ENCODE measurements at regions of chr17 and their contacts with region 1.

Region 1: GRCh38 chr17:68462381-68463210 is 5.3 kb upstream of the WIPI1 start:
- DNase-seq: peak; percentile 62 to 87 (median 72)
- ATAC-seq: peak; percentile 63 to 80 (median 78)
- H3K4me3 ChIP-seq: peak overlapping the region in 2 of 12 donors; percentile 15
- H3K27ac ChIP-seq: peak overlapping the region; percentile 59 to 96 (median 80)
- H3K4me1 ChIP-seq: peaks cover 0 to 57% (median 28%) of the 10 kb centered on the region in 12 donors
- H3K27me3 ChIP-seq: no peaks in the 10 kb centered on the region
- CTCF ChIP-seq: peak; percentile 56 to 84 (median 75)
- POLR2A ChIP-seq: no peak

Region 2: GRCh38 chr17:68172461-68172954 is 290.1 kb before region 1 on chr17:
- intact Hi-C with region 1: loop called (anchors 1 to 5 kb)
- DNase-seq: peak; percentile 53 to 73 (median 62)
- ATAC-seq: peak; percentile 54 to 81 (median 77)
- H3K4me3 ChIP-seq: no peak overlapping the region
- H3K27ac ChIP-seq: no peak overlapping the region
- H3K4me1 ChIP-seq: peaks cover 0 to 4% (median 0%) of the 10 kb centered on the region in 12 donors
- H3K27me3 ChIP-seq: no peaks in the 10 kb centered on the region
- CTCF ChIP-seq: peak; percentile 91 to 99 (median 97)
- POLR2A ChIP-seq: no peak

Region 3: DNA sequence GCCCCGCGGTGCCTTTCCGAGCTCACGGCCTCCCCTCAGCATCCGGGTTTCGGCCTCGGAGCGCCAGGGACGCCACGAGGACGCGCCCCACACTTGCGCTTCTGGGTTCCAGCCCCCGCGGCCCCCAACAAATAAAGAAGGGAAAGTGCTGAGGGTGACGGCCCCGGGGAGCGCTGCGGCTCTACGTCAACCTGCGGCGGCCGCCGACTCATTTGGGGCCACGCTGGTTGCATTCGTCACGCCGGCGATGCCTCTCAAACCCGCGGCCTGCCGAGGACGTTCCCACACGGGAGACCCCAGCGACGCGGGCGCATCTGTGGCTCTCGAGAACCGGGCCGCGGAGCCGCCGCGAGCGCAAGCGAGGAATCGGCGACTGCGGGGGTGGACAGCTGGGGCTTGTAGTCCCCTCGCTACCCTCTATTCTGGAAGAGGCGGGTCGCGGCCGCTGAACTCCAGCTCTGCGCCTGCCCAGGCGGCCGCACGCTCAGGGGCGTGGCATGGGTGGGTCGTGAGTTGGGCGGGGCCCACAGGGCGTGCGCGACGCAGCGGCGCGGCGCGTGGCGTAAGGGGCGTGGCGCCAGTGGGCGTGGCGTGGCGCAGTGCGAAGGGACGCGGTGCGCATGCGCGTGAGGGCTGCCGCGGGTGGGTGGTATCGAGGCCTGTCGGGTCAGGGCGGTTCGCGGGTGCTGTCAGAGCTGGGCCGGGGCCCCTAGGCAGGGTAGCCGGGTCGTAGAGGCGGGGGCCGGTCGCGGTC is 215.0 kb before region 1 on chr17 and contains the start of gene AMZ2:
- intact Hi-C with region 1: loop called in 2 of 10 experiments (anchors 5 kb)
- DNase-seq: peak; percentile 94 to 99 (median 96)
- ATAC-seq: peak; percentile 98 to 100 (median 98)
- H3K4me3 ChIP-seq: peak within 1 kb of the TSS; percentile 68 to 94 (median 86)
- H3K27ac ChIP-seq: peak within 1 kb of the TSS; percentile 89 to 99 (median 98)
- H3K4me1 ChIP-seq: peaks cover 0 to 26% (median 13%) of the 10 kb centered on the region in 12 donors
- H3K27me3 ChIP-seq: no peaks in the 10 kb centered on the region
- CTCF ChIP-seq: no peak
- POLR2A ChIP-seq: peak; percentile 76 to 98
- total RNA-seq, gene AMZ2: 59.0 to 141 (median 91.3) TPM

Region 4: GRCh38 chr17:68512247-68512982 is 49.8 kb after region 1 on chr17 and contains the start of gene PRKAR1A:
- intact Hi-C with region 1: loop called in 4 of 10 experiments (anchors 2 to 5 kb)
- DNase-seq: peak; percentile 96 to 97 (median 96)
- ATAC-seq: peak; percentile 89 to 94 (median 92)
- H3K4me3 ChIP-seq: peak within 1 kb of the TSS; percentile 60 to 94 (median 76)
- H3K27ac ChIP-seq: peak within 1 kb of the TSS; percentile 96 to 100 (median 98)
- H3K4me1 ChIP-seq: peaks cover 0 to 73% (median 40%) of the 10 kb centered on the region in 12 donors
- H3K27me3 ChIP-seq: no peaks in the 10 kb centered on the region
- CTCF ChIP-seq: peak in 2 of 12 donors; percentile 11 to 26
- POLR2A ChIP-seq: peak; percentile 74 to 95
- total RNA-seq, gene PRKAR1A: 435 to 1,392 (median 837) TPM

Measured in heart left ventricle (tissue), 16 donors.